Dorsolateral prefrontal cortex (tissue), 120 donors: ENCODE measurements at regions of chr15 and their contacts with region 1.

Region 1: DNA sequence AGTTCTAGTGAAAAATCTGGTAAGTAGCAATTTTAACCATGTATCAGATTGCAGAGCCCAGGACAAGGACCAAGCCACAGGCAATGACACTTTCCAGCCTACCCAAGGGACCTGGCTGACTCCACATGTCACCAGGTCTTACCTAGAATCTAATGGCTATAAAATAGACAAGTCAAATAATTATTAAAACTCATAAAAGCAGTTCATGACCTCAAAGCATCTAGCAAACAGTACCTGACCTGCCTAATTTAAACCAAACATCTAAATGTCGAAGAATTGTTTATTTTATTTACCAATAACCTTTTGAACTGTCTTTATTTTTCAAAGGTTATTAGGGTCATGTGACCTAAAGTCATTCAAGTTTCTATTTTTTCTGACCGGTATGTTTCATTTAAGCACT is 35.6 kb upstream of the MKRN3 start:
- DNase-seq: no peak
- H3K4me3 ChIP-seq: no peak overlapping the region
- H3K27ac ChIP-seq: no peak overlapping the region
- H3K27me3 ChIP-seq: peaks cover 0 to 7% (median 0%) of the 10 kb centered on the region in 45 donors
- CTCF ChIP-seq: no peak

Region 2: DNA sequence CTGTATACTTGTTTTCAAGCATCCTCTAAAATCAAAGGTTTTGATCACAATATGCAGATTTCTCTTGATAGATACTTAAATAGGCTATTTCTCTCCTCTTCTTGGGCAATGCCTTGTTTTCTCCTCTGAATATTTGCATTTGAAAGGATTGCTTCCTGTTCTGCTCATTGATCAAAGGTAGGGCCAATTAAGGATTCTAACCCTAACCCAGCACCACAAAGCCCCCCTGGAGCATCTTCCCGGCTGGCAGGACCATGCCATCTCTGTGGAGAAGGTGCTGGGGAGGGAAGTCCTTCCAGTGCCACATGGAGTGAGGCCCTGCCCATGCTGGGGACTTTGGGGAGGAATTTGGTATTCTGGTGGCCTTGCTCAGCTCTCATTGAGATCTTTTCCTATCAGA is 702.8 kb before region 1 on chr15:
- intact Hi-C with region 1: no loop called
- DNase-seq: no peak
- H3K4me3 ChIP-seq: no peak overlapping the region
- H3K27ac ChIP-seq: no peak overlapping the region
- H3K27me3 ChIP-seq: no peaks in the 10 kb centered on the region
- CTCF ChIP-seq: no peak

Region 3: GRCh38 chr15:23447107-23447500 is 82.8 kb before region 1 on chr15 and contains the start of gene GOLGA6L2:
- intact Hi-C with region 1: loop called in 1 of 2 experiments (anchors 10 kb)
- DNase-seq: no peak
- H3K4me3 ChIP-seq: no peak within 1 kb of the TSS
- H3K27ac ChIP-seq: no peak within 1 kb of the TSS
- H3K27me3 ChIP-seq: peaks cover 0 to 29% (median 6%) of the 10 kb centered on the region in 45 donors
- CTCF ChIP-seq: no peak
- total RNA-seq, gene GOLGA6L2: not detected